Common myeloid progenitor, CD34-positive (primary cell): ENCODE measurements at regions of chr5 and their contacts with region 1.

Region 1: GRCh38 chr5:142984011-142984410 is 213.8 kb downstream of the ARHGAP26 start:
- DNase-seq: no peak
- H3K4me3 ChIP-seq: no peak overlapping the region
- H3K27ac ChIP-seq: peak overlapping the region in 1 of 2 experiments; percentile 15
- H3K4me1 ChIP-seq: peaks cover 5 to 43% (median 37%) of the 10 kb centered on the region in 4 experiments
- H3K27me3 ChIP-seq: no peaks in the 10 kb centered on the region

Region 2: GRCh38 chr5:142939884-142940283 is 44.1 kb before region 1 on chr5:
- CTCF ChIA-PET with region 1: no interaction called
- POLR2A ChIA-PET with region 1: no interaction called
- DNase-seq: no peak
- H3K4me3 ChIP-seq: no peak overlapping the region
- H3K27ac ChIP-seq: no peak overlapping the region
- H3K4me1 ChIP-seq: peaks cover 17 to 40% (median 22%) of the 10 kb centered on the region in 4 experiments
- H3K27me3 ChIP-seq: no peaks in the 10 kb centered on the region

Region 3: GRCh38 chr5:142994218-142994617 is 10.2 kb after region 1 on chr5:
- CTCF ChIA-PET with region 1: interaction called, 11 read pairs
- POLR2A ChIA-PET with region 1: interaction called, 5 read pairs
- DNase-seq: no peak
- H3K4me3 ChIP-seq: no peak overlapping the region
- H3K27ac ChIP-seq: no peak overlapping the region
- H3K4me1 ChIP-seq: peaks cover 0 to 17% (median under 1%) of the 10 kb centered on the region in 4 experiments
- H3K27me3 ChIP-seq: no peaks in the 10 kb centered on the region